Activated CD4-positive, alpha-beta memory T cell treated with anti-CD3 and anti-CD28 coated beads, Interleukin-2, amount 10 ng/mL, durations not matched to agents 7 days and 5 days (primary cell): ENCODE measurements at regions of chr5 and their contacts with region 1.

Region 1: GRCh38 chr5:62297026-62297425 is 9.0 kb upstream of the KIF2A start:
- DNase-seq: peak; percentile 30
- H3K4me3 Mint-ChIP-seq: peak overlapping the region; percentile 12
- H3K27ac Mint-ChIP-seq: peak overlapping the region; percentile 83
- H3K4me1 Mint-ChIP-seq: peaks cover 71% of the 10 kb centered on the region
- H3K27me3 Mint-ChIP-seq: no peaks in the 10 kb centered on the region

Region 2: DNA sequence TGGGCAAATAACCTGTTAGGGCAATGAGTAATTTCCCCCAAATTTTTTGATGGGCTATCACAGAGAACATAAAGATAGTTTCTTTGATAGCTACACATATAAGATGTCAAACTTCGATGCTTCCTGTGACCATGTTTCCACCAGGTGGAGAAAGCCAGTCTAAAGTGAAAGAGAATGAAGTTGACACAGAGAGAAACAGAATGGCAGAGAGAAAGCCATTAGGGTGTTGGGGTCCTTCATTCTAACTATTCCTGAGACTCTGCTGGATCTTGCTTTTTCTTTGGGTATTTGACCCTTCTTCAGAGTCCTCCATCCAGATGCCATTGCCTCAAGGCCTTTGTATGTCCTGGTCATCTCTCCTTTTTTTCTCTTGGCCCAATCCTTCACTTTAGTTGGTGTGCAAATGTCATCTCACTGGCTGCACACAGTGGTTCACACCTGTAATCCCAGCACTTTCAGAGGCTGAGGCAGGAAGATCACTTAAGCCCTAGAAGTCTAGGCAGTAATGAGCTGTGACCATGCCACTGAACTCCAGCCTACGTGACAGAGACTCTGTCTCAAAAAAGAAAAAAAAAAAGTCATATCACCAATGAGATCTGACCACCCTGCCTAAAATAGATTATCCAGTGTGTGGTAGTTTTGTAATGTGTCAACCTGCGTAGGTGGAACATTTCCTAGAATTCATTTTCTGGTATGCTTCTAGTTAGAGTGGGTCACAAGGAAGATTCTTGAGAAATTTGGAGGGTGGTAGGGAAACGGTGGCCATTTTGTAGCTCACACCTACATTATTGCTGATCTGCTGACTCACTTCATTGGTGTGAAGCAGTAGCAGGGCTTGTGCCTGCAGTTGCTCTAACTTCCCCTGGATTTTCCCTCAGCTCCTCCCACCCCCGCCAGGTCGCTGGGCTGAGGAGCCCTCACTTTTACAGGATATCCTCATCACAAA is 11.8 kb before region 1 on chr5:
- CTCF ChIA-PET with region 1: interaction called, 22 read pairs
- POLR2A ChIA-PET with region 1: interaction called, 34 read pairs
- DNase-seq: peak; percentile 78
- H3K4me3 Mint-ChIP-seq: peak overlapping the region; percentile 43
- H3K27ac Mint-ChIP-seq: peak overlapping the region; percentile 98
- H3K4me1 Mint-ChIP-seq: peaks cover 76% of the 10 kb centered on the region
- H3K27me3 Mint-ChIP-seq: no peaks in the 10 kb centered on the region